Activated naive CD4-positive, alpha-beta T cell treated with anti-CD3 and anti-CD28 coated beads for 36 hours (primary cell): ENCODE measurements at regions of chr12 and their contacts with region 1.

Region 1: GRCh38 chr12:46071769-46072624 is 81.6 kb upstream of the SCAF11 start:
- DNase-seq: peak; percentile 82
- H3K4me3 Mint-ChIP-seq: peak overlapping the region; percentile 20
- H3K27ac Mint-ChIP-seq: peak overlapping the region; percentile 19
- H3K4me1 Mint-ChIP-seq: peaks cover 3% of the 10 kb centered on the region
- H3K27me3 Mint-ChIP-seq: no peaks in the 10 kb centered on the region

Region 2: DNA sequence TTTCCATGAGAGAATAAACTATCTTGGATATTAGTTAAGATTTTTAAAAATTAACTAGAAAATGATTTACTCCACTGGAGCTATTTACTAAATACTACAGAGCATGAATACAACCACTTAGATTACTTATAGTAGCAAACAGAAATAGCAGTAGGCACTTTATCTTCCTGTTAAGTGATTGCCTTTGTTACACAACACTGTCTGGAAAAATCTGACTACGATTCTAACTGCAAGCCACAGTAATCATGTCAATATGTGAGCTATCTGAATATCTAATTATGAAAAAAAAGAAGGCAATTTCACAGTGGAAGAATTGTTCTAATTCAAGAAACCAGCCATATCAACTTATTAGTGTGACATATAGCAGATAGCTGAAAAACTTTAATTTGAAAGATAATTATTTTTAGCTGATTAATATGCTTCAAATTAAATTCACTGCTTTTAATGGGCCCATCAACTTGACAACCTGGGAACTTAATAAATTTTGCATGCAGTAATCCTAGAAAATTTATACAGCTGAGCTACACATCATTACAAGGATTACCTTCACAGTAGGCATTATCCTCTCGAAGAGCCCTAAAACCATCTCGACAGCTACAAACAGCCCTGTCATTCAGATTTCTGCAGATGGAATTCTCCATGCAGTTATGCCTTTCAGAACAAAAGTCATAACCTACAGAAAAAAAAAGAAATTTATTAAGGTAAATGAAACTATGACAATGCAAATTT is 1368.7 kb before region 1 on chr12:
- CTCF ChIA-PET with region 1: no interaction called
- intact Hi-C with region 1: no loop called
- DNase-seq: no peak
- H3K4me3 Mint-ChIP-seq: no peak overlapping the region
- H3K27ac Mint-ChIP-seq: no peak overlapping the region
- H3K4me1 Mint-ChIP-seq: peaks cover 4% of the 10 kb centered on the region
- H3K27me3 Mint-ChIP-seq: no peaks in the 10 kb centered on the region

Region 3: DNA sequence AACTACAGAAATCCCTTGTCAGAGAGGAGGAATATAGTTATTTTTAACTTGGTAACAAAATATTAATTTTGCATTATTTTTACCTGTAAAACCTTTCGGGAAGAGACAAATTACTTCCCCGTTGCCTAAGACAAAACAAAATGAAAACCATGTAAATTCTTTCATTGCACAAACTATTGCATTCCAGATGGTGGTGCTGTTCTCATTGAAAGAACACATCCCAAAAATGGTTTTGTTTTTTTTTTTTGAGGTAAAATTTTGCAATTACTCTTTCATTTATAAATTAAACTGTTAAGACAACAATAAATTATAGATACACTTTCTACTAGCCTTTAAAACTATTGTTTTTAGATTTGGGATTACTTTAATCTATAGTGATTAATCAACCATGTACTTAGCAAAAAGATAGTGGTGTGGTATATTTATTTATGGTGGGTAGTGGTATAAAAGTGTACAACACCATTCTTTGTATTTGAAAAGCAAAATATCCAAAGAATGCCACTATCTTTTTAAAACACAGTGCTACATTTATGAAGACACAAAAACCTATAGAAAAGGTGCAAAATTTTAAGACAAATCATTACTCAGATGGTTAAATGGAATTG is 81.4 kb after region 1 on chr12:
- CTCF ChIA-PET with region 1: no interaction called
- intact Hi-C with region 1: loop called (anchors 2 kb)
- DNase-seq: no peak
- H3K4me3 Mint-ChIP-seq: no peak overlapping the region
- H3K27ac Mint-ChIP-seq: no peak overlapping the region
- H3K4me1 Mint-ChIP-seq: peaks cover 12% of the 10 kb centered on the region
- H3K27me3 Mint-ChIP-seq: peaks cover under 1% of the 10 kb centered on the region

Region 4: DNA sequence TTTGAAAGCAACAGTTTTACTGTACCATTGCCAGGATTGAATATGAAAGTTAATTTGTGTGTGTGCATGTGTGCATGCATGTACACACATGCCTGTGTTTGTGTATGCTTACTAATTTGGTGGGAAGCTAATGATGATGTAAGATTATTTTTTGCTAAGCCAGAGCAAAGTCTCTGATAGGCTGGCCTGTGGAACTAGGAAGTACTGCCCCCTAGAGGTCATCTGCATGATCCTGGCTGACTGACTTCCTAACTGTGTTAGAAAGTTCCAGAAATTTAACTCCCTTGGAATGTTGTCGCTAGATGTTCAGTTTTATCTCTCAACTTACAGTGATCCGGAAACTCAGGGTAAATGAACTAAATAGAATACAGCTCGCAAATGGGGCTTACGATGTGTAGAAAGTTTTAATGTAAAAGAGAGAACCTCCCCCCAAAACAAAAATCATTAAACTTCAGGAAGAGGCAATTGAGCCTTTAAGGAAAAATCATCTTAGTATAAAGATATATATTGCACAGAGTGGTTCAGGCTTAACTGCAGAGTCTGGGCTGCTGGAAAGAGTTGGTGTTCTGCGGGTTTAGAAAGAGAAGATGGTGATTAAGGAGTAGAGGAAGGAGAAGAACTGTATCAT is 231.2 kb after region 1 on chr12:
- CTCF ChIA-PET with region 1: interaction called, 5 read pairs
- intact Hi-C with region 1: loop called (anchors 5 kb)
- DNase-seq: peak; percentile 66
- H3K4me3 Mint-ChIP-seq: no peak overlapping the region
- H3K27ac Mint-ChIP-seq: no peak overlapping the region
- H3K4me1 Mint-ChIP-seq: peaks cover 8% of the 10 kb centered on the region
- H3K27me3 Mint-ChIP-seq: no peaks in the 10 kb centered on the region

Region 5: DNA sequence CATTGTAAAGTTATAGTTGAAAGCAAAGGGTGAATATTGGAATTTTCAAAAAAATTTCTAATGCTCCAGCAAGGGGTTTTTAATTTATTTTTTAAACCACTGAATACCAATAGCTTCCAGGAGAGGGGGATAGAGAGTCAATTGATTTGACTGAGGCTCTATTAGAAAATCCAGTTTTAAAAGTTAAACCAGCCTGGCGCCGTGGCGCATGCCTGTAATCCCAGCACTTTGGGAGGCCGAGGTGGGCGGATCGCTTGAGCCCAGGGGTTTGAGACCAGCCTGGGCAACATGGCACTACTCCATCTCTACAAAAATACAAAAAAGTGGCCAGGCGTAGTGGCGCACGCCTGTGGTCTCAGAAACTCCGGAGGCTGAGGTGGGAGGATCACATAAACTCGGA is 603.7 kb after region 1 on chr12:
- CTCF ChIA-PET with region 1: no interaction called
- intact Hi-C with region 1: loop called (anchors 1 kb)
- DNase-seq: no peak
- H3K4me3 Mint-ChIP-seq: no peak overlapping the region
- H3K27ac Mint-ChIP-seq: no peak overlapping the region
- H3K4me1 Mint-ChIP-seq: peaks cover 7% of the 10 kb centered on the region
- H3K27me3 Mint-ChIP-seq: no peaks in the 10 kb centered on the region

Region 6: DNA sequence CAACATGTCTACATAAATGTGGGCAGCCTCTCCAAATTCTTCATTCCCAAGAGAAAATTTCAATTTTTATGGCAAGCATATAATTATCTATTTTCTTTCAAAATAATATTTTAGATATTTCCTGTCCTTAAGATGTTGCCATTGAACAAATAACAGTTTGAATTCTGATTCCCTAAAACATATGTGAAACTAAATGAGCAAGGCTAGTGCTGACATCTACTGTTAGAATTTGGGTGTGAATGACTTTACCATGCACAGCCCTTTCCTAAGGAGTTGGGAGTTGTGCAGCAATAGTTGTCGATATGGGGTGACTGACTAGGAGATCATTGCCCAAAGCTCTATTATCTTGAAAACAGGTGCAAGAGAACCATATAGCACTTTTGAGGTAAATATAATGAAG is 862.0 kb after region 1 on chr12:
- CTCF ChIA-PET with region 1: no interaction called
- intact Hi-C with region 1: loop called (anchors 5 kb)
- DNase-seq: no peak
- H3K4me3 Mint-ChIP-seq: no peak overlapping the region
- H3K27ac Mint-ChIP-seq: no peak overlapping the region
- H3K4me1 Mint-ChIP-seq: no peaks in the 10 kb centered on the region
- H3K27me3 Mint-ChIP-seq: peaks cover 8% of the 10 kb centered on the region

Region 7: GRCh38 chr12:46983393-46984266 is 911.6 kb after region 1 on chr12:
- CTCF ChIA-PET with region 1: interaction called, 3 read pairs
- intact Hi-C with region 1: loop called (anchors 1 kb)
- DNase-seq: peak; percentile 55
- H3K4me3 Mint-ChIP-seq: no peak overlapping the region
- H3K27ac Mint-ChIP-seq: no peak overlapping the region
- H3K4me1 Mint-ChIP-seq: peaks cover 9% of the 10 kb centered on the region
- H3K27me3 Mint-ChIP-seq: peaks cover 5% of the 10 kb centered on the region

Region 8: GRCh38 chr12:47021298-47021697 is 949.3 kb after region 1 on chr12:
- CTCF ChIA-PET with region 1: interaction called, 4 read pairs
- intact Hi-C with region 1: loop called (anchors 1 kb)
- DNase-seq: no peak
- H3K4me3 Mint-ChIP-seq: no peak overlapping the region
- H3K27ac Mint-ChIP-seq: no peak overlapping the region
- H3K4me1 Mint-ChIP-seq: no peaks in the 10 kb centered on the region
- H3K27me3 Mint-ChIP-seq: no peaks in the 10 kb centered on the region